PC-3 (cell line): ENCODE measurements at regions of chr3 and their contacts with region 1.

Region 1: DNA sequence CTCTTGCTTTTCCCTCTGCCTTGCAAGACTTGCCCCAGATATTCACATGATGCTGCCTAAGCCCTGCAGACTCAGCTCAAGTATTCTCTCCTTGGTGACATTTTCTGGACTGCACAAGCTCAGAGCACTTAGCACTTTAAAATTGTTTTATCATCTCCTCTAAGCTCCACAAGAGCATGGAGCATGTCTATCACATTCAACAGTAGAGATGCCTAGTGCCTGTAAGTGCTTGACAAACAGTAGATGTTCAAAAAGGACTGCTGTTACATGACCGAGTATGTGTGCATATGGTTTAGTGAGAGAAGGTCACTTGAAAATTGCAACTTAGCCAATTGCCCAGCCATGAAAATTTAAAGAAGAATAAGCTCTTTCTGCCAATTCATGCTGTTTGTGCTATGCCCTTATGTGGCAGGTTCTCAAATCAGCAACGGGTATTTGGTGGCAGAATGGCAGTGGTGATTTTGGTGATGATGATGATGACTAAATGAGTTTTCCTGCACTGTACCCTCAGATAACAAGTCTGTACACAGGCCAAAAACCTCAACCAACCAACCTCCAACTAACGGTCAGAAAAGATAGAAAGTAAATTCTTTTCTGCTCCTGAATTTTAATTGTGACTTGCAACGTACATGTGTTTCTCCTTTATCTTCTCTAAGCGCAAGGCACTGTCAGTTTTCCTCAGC is 647.2 kb upstream of the UBE2E2 start:
- DNase-seq: no peak
- ATAC-seq: no peak
- H3K4me3 ChIP-seq: no peak overlapping the region
- H3K27ac ChIP-seq: no peak overlapping the region
- H3K4me1 ChIP-seq: no peaks in the 10 kb centered on the region
- H3K27me3 ChIP-seq: no peaks in the 10 kb centered on the region
- CTCF ChIP-seq: no peak

Region 2: DNA sequence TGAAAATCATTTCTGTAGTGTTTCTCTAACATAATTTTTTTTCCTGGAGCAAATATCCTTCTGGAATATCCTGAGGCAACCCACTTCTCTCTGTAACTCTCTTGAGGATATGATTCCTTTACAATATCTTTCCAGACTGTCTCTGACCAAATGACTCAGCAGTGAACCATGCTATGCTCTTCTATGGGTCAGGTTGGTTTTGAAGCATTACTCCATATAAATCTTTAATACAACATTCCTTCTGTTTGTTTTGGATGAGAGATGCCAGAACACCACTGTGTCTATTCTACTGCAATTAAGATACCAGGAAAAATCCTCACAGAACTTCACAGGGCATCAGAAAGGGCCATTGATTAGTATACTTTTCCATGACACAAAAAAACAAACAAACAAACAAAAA is 178.5 kb before region 1 on chr3:
- CTCF ChIA-PET with region 1: no interaction called
- POLR2A ChIA-PET with region 1: no interaction called
- intact Hi-C with region 1: loop called (anchors 5 kb)
- DNase-seq: peak; percentile 83
- ATAC-seq: peak; percentile 98
- H3K4me3 ChIP-seq: no peak overlapping the region
- H3K27ac ChIP-seq: no peak overlapping the region
- H3K4me1 ChIP-seq: peaks cover 16% of the 10 kb centered on the region
- H3K27me3 ChIP-seq: no peaks in the 10 kb centered on the region
- CTCF ChIP-seq: no peak